ENCODE measurements at regions of chr11 and their contacts with region 1.

Region 1: GRCh38 chr11:9460322-9461067 is at the start of gene ZNF143:
- DNase-seq: peak; percentile 93
- H3K4me3 ChIP-seq: peak within 1 kb of the TSS; percentile 84 to 95
- H3K27ac ChIP-seq: peak within 1 kb of the TSS; percentile 98 to 99
- H3K4me1 ChIP-seq: peaks cover 0 to 2% of the 10 kb centered on the region in 2 experiments; a peak in 1 of 4 replicates
- H3K27me3 ChIP-seq: no peaks in the 10 kb centered on the region
- CTCF ChIP-seq: no peak
- EP300 ChIP-seq: peak in 1 of 2 experiments; percentile 4; a peak in 2 of 4 replicates
- RAD21 ChIP-seq: no peak
- polyA plus RNA-seq, gene ZNF143: 11.3 and 17.0 TPM in 2 replicates

Region 2: DNA sequence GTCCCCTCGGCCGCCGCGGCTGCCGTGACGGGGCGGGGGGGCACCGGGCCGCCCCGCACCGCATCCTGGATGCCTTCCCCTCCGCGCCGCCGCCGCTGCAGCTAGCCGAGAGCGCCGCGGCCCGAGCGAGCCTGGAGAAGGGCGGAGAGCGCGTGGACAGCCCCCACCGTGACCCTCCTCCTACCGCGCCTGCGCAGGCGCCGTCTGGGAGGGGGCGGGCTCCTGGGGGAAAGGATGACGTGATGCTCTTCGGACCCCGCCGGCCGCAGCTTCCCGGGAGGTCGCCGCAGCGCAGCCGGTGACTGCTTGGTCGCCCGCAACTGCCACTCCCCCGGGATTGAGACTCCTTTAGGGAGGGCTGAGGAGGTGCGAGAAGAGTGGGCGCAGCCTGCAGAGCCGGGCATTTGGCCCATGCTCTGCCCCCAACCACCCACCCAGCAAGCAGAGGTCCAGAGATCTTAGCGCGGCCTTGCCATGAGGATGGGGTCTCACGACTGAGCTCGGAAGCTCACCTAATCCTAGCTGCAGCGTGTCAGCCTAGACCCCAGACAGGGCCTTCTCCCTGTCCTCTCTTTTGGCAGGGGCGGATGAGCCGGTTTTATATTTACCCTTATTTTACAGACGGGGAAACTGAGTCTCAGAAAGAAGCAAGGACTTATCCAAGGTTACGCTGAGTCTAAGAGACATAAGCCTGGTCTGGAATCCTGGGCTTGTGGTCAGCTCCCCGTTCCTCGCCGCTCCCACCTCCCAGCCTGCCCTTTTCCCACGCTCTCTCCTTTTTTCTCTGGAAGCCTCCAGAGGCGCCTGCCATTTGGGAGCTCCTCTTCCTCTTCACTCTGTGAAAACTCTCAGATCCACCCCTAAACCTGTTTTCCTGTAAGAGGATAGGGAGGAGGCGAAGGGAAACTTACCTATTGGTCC is 195.0 kb before region 1 on chr11 and contains the start of gene DENND5A:
- CTCF ChIA-PET with region 1: no interaction called
- POLR2A ChIA-PET with region 1: interaction called, 11 read pairs
- DNase-seq: peak; percentile 100
- H3K4me3 ChIP-seq: peak within 1 kb of the TSS; percentile 73 to 79
- H3K27ac ChIP-seq: peak within 1 kb of the TSS; percentile 77 to 83
- H3K4me1 ChIP-seq: peaks cover 5 to 18% of the 10 kb centered on the region in 2 experiments; a peak in 3 of 4 replicates
- H3K27me3 ChIP-seq: no peaks in the 10 kb centered on the region
- CTCF ChIP-seq: no peak
- EP300 ChIP-seq: no peak
- RAD21 ChIP-seq: peak; percentile 19; the same call in 1 of the 2 replicates
- polyA plus RNA-seq, gene DENND5A: 110 and 124 TPM in 2 replicates

Region 3: DNA sequence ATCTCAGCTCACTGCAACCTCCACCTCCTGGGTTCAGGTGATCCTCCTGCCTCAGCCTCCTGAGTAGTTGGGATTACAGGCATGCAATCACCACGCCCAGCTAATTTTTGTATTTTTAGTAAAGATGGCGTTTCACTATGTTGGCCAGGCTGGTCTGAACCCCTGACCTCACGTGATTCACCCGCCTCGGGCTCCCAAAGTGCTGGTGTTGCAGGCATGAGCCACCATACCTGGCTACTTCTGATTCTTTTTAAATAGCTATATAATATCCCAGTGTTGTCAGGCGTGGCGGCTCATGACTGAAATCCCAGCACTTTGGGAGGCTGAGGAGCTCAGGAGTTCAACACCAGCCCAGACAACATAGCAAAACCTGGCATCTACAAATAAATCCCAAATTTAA is 166.8 kb before region 1 on chr11:
- CTCF ChIA-PET with region 1: no interaction called
- POLR2A ChIA-PET with region 1: no interaction called
- DNase-seq: no peak
- H3K4me3 ChIP-seq: no peak overlapping the region
- H3K27ac ChIP-seq: no peak overlapping the region
- H3K4me1 ChIP-seq: no peaks in the 10 kb centered on the region
- H3K27me3 ChIP-seq: no peaks in the 10 kb centered on the region
- CTCF ChIP-seq: no peak
- EP300 ChIP-seq: no peak
- RAD21 ChIP-seq: no peak

Region 4: GRCh38 chr11:9314291-9315036 is 146.0 kb before region 1 on chr11 and contains the start of gene TMEM41B:
- CTCF ChIA-PET with region 1: no interaction called
- POLR2A ChIA-PET with region 1: interaction called, 13 read pairs
- DNase-seq: peak; percentile 99
- H3K4me3 ChIP-seq: peak within 1 kb of the TSS; percentile 77 to 82
- H3K27ac ChIP-seq: peak within 1 kb of the TSS; percentile 96 to 98
- H3K4me1 ChIP-seq: peaks cover 8 to 10% of the 10 kb centered on the region in 2 experiments; a peak in 3 of 4 replicates
- H3K27me3 ChIP-seq: no peaks in the 10 kb centered on the region
- CTCF ChIP-seq: 0 out of 2 replicates have a peak, but pooled peaks have one; percentile 15
- EP300 ChIP-seq: peak; percentile 10 to 34; a peak in 1 of 4 replicates
- RAD21 ChIP-seq: peak; percentile 32
- polyA plus RNA-seq, gene TMEM41B: 19.8 and 23.5 TPM in 2 replicates

Region 5: DNA sequence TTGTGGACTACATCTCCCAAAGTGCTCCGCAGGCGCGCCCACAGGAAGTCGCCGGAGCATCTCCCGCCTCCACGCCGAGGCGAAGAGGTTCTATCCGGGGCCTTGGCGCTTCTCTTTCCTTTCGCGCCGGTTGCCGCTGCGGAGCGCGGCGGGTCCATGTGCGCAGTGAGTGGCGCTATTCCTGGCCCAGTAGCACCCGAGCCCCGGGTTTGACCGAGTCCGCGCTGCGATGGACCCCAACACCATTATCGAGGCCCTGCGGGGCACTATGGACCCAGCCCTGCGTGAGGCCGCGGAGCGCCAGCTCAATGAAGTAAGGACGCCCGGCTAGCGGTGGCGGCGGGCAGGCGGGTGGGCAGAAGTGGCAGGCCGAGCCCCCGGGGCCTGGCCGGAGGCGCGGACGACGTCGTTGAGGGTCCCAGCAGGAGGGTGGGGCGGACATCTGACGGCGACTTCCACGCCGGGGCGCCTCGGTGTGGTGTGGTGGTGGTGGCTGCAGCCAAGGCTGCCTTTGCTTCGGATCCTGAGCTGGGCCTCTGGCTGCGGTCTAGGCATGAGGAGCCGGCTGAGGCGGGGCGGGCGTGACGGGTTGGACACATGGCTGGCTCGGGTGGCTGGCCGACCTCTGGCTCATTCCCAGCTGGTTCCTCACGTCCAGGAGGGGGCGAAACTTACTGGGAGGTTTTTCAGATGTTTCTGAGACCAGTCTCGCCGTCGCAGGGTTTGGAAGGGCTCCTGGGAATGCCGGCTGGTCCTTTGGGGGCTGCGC is 75.8 kb before region 1 on chr11 and contains the start of gene IPO7:
- CTCF ChIA-PET with region 1: no interaction called
- POLR2A ChIA-PET with region 1: interaction called, 27 read pairs
- DNase-seq: peak; percentile 94
- H3K4me3 ChIP-seq: peak within 1 kb of the TSS; percentile 77 to 79
- H3K27ac ChIP-seq: peak within 1 kb of the TSS; percentile 88 to 97
- H3K4me1 ChIP-seq: peaks cover 0 to 4% of the 10 kb centered on the region in 2 experiments; a peak in 1 of 4 replicates
- H3K27me3 ChIP-seq: no peaks in the 10 kb centered on the region
- CTCF ChIP-seq: peak; percentile 56
- EP300 ChIP-seq: peak in 1 of 2 experiments; percentile 11; a peak in 1 of 4 replicates
- RAD21 ChIP-seq: peak; percentile 19; the same call in 1 of the 2 replicates
- polyA plus RNA-seq, gene IPO7: 25.4 and 34.8 TPM in 2 replicates

Region 6: GRCh38 chr11:9473408-9473807 is 12.9 kb after region 1 on chr11:
- CTCF ChIA-PET with region 1: interaction called, 4 read pairs
- POLR2A ChIA-PET with region 1: interaction called, 17 read pairs
- DNase-seq: peak; percentile 69
- H3K4me3 ChIP-seq: no peak overlapping the region
- H3K27ac ChIP-seq: peak overlapping the region; percentile 44 to 53; a peak in 3 of 4 replicates
- H3K4me1 ChIP-seq: no peaks in the 10 kb centered on the region
- H3K27me3 ChIP-seq: no peaks in the 10 kb centered on the region
- CTCF ChIP-seq: no peak
- EP300 ChIP-seq: no peak
- RAD21 ChIP-seq: no peak

Region 7: DNA sequence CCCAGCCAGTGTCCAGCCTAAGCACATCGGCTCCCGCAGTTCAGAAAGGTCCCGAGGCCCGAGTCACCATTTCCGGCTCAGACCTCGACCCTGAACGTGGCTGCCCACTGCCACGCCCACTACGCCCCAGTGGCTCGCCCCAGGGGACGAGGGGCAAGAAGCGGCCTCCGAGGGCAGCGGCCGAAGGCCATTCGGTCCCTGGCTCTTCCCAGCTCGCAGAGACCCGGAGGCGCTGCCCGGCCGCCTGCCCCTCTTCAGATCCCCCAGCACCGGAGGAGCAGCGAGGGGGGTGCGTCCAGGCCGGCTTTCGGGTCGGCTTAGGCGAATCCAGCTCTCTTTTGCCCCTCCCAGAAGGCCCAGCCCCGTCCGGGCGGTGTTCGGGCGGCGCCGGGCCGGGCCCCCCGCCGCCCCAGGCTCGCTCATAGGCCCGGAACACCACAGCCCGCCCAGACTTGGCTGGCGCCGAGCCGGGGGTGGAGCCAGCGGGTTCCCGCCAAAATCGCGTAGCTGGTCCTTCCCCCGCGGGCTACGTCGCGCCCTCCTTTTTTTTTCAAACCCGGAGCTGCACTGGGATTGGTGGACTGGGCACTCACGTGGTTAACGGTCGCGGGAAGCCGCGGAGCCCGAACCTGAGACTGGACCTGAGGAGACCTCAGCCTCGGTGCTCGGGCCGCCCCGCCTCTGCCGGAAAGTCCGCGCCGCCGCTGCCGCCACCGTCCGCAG is 112.7 kb after region 1 on chr11 and contains the start of gene WEE1:
- CTCF ChIA-PET with region 1: no interaction called
- POLR2A ChIA-PET with region 1: interaction called, 15 read pairs
- DNase-seq: peak; percentile 97
- H3K4me3 ChIP-seq: peak within 1 kb of the TSS; percentile 70 to 89
- H3K27ac ChIP-seq: peak within 1 kb of the TSS; percentile 95 to 99
- H3K4me1 ChIP-seq: peaks cover 14 to 20% of the 10 kb centered on the region in 2 experiments
- H3K27me3 ChIP-seq: no peaks in the 10 kb centered on the region
- CTCF ChIP-seq: no peak
- EP300 ChIP-seq: peak; percentile 26 to 30; a peak in 1 of 4 replicates
- RAD21 ChIP-seq: no peak
- polyA plus RNA-seq, gene WEE1: 16.9 and 20.6 TPM in 2 replicates

Measured in SK-N-SH (cell line).